GM13977 (cell line): ENCODE measurements at regions of chr11 and their contacts with region 1.

Region 1: GRCh38 chr11:34366522-34366921 is 8.7 kb upstream of the ABTB2 start:
- DNase-seq: peak; percentile 56
- CTCF ChIP-seq: peak; percentile 60

Region 2: GRCh38 chr11:33996498-33997454 is 369.7 kb before region 1 on chr11:
- in situ Hi-C with region 1: loop called (anchors 10 kb)
- DNase-seq: peak; percentile 78
- CTCF ChIP-seq: peak; percentile 82

Region 3: DNA sequence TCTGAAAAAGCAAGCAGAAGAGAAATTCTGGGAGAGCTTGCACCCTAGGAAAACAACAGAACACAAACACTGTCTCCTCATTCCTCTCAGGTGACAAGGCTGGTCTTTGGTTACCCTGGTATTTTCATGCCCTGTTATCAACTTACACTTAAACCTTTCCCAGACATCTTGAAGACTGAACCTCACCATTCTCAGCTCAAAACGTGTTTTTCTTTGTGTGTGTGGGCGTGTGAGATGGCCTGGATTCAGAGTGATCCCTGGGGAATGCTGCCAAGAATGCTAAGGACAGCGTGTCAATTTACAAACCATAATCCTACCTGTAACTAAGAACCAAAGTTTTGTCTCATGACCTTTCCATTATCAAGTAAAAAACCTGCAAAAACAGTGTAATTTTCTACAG is 113.8 kb after region 1 on chr11:
- in situ Hi-C with region 1: loop called (anchors 10 kb)
- DNase-seq: no peak
- CTCF ChIP-seq: no peak

Region 4: DNA sequence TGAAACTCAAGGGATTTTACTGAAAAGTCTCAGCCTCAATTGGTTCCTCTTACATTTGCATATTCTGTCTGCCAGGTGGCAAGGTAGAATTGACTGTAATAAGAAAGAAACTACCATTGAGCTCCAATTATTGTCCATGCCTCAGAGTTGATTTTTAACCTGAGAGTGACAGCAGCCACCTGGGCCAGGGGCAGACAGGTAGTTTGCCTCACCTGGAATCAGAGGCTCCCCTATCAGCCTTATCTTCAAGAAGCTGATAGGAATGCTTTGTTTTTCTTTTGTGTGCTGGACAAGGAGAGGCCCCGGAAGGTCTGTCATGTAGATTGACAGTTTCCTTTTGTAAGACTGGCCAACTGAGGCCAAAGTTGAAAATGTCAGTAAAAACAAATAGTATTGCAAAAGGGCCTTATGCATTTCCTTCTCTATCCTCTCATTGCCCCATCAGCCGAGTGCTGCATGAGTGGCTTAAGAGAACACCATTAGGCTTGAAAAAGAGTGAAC is 806.5 kb after region 1 on chr11:
- in situ Hi-C with region 1: no loop called
- DNase-seq: peak; percentile 12
- CTCF ChIP-seq: no peak